ENCODE measurements at regions of chr17 and their contacts with region 1.

Region 1: GRCh38 chr17:80263253-80264204 is 2.9 kb downstream of the RNF213 start:
- DNase-seq: peak; percentile 81 to 86
- ATAC-seq: peak; percentile 50 to 66
- H3K4me3 ChIP-seq: peak overlapping the region; percentile 30 to 47 (median 37)
- H3K27ac ChIP-seq: peak overlapping the region; percentile 93 to 100 (median 98)
- H3K4me1 ChIP-seq: peaks cover 24 to 34% of the 10 kb centered on the region in 2 donors
- H3K27me3 ChIP-seq: no peaks in the 10 kb centered on the region
- CTCF ChIP-seq: peak in 1 of 5 experiments; percentile 22
- POLR2A ChIP-seq: peak in 1 of 2 donors; percentile 32

Region 2: DNA sequence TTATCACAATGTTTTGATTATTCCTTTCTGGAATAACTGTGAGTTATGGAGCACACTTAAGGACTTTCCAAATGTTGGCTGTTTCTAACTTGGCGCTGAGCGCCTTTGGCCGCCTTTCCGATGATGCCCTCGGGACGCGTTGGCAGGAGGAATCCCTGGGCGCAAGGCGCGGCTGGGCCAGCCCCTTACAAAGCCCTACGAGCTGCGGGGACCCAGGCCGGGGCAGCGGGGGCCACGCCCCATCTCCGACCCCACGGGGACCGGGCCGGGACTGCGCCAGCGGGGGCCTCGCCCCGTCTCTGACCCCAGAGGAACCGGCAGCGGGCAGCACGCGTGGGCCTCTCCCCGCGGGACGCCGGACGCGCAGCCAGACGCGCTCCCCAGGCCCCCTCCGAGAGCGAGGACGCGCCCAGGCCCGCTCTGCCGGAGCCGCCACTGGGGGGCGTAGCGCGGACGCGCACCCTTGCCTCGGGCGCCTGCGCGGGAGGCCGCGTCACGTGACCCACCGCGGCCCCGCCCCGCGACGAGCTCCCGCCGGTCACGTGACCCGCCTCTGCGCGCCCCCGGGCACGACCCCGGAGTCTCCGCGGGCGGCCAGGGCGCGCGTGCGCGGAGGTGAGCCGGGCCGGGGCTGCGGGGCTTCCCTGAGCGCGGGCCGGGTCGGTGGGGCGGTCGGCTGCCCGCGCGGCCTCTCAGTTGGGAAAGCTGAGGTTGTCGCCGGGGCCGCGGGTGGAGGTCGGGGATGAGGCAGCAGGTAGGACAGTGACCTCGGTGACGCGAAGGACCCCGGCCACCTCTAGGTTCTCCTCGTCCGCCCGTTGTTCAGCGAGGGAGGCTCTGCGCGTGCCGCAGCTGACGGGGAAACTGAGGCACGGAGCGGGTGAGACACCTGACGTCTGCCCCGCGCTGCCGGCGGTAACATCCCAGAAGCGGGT is 162.3 kb before region 1 on chr17 and contains the start of gene GAA:
- in situ Hi-C with region 1: no loop called
- intact Hi-C with region 1: loop called (anchors 5 kb)
- DNase-seq: peak; percentile 59 to 71
- ATAC-seq: peak; percentile 91 to 93
- H3K4me3 ChIP-seq: peak within 1 kb of the TSS; percentile 79 to 93 (median 88)
- H3K27ac ChIP-seq: peak within 1 kb of the TSS; percentile 87 to 90 (median 88)
- H3K4me1 ChIP-seq: peaks cover 9 to 20% of the 10 kb centered on the region in 2 donors
- H3K27me3 ChIP-seq: no peaks in the 10 kb centered on the region
- CTCF ChIP-seq: peak in 4 of 5 experiments; percentile 96 to 99 (median 98)
- POLR2A ChIP-seq: peak; percentile 64 to 81
- total RNA-seq, gene GAA: 39.2 to 72.3 (median 70.1) TPM

Region 3: DNA sequence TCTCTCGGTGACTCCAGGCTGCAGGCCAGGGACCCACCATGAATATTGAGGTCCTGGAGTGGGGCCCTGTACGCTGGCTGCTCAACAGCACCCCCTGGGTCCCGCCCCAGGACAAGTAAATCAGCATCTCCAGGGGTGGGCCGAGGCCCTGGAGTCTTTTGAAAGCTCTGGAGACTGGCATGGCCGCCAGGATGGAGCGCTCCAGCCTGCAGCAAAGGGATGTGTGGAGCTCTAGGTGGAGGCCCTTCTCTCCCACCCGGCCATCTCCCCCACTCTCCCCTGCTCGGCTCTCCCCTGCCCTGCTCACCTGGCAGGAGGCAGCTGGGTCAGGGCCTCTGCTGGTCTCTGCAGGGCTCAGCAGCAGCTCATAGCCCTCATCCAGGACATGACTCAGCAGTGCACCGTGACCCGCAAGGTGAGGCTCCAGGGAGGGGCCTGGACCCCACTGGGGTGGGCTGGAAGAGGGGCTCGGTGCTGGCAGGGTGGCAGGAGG is 60.0 kb before region 1 on chr17:
- in situ Hi-C with region 1: no loop called
- intact Hi-C with region 1: no loop called
- DNase-seq: no peak
- ATAC-seq: no peak
- H3K4me3 ChIP-seq: no peak overlapping the region
- H3K27ac ChIP-seq: no peak overlapping the region
- H3K4me1 ChIP-seq: no peaks in the 10 kb centered on the region
- H3K27me3 ChIP-seq: no peaks in the 10 kb centered on the region
- CTCF ChIP-seq: no peak
- POLR2A ChIP-seq: no peak

Region 4: DNA sequence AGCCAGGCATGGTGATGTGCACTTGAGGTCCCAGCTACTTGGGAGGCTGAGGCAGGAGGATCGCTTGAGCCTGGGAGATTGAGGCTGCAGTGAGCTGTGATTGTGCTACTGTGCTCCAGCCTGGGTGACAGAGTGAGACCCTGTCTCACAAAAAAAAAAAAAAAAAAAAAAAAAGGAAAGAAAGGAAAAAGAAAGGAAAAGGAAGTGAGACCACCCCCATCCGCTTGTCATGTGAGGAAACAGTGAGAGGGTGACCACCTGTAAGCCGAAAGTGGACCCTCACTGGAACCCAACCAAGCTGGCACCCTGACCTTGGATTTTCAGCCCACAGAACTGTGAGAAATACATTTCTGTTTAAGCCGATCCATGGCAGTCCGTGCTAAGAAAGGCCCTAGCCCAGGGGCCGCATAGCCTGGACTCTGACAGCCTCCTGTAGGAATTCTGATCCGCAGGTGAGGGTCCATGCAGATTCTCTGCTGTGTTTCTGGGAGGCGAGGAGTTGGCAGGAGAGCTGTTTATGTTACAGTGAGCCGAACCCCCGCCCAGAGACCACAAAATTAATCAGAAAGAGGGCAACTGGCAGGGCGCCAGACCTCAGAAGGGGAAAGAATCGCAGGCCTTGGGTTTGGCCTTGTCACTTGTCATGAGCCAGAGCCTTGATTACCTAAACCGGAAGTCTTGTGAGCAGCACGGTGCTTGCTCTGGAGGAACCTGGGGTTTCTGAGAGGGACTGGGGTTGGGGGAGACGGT is 44.3 kb before region 1 on chr17:
- in situ Hi-C with region 1: no loop called
- intact Hi-C with region 1: loop called (anchors 2 kb)
- DNase-seq: peak; percentile 61
- ATAC-seq: peak; percentile 54 to 63
- H3K4me3 ChIP-seq: peak overlapping the region; percentile 69 to 90 (median 78)
- H3K27ac ChIP-seq: peak overlapping the region; percentile 82 to 85 (median 84)
- H3K4me1 ChIP-seq: peaks cover 17 to 18% of the 10 kb centered on the region in 2 donors
- H3K27me3 ChIP-seq: no peaks in the 10 kb centered on the region
- CTCF ChIP-seq: no peak
- POLR2A ChIP-seq: no peak

Measured in gastrocnemius medialis (tissue), 4 donors.